Naive thymus-derived CD4-positive, alpha-beta T cell (primary cell): ENCODE measurements at regions of chr11 and their contacts with region 1.

Region 1: DNA sequence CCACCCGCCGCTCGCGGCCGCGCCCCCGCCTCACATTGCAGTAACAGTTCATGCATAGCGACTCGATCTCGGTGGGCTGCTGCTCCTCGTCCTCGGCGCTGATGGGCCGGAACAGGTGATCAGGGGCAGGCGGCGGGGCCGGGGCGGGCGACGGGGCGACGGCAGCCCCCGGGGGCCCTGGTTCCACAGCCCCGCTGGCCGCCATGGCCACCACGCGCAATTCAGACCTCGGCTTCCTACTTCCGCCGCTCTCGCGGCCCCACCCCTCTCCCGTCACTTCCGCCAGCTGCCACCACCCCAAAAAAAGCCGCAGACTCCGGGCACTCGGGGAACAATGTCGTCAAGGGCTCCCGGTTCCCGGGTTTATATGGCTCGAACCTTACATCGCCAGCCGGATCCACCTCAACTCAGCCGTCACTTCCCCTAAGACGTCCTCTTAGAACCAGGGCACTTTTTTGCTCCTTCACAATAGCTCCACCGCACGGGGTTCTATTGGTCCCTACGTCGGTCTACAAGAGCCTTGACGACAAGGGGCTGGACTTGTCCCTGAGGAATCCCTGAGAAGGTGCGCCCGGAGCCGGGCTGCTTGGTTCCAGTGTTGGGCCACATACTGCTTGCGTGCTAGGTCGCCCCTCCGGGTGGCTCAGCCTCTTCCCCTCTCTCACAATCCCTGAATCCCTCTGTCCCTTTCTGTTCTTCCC is at the start of gene ZPR1:
- DNase-seq: peak; percentile 75 to 88 (median 87)
- ATAC-seq: peak; percentile 92
- H3K4me3 ChIP-seq: peak within 1 kb of the TSS; percentile 79
- H3K4me3 Mint-ChIP-seq: peak within 1 kb of the TSS; percentile 85 to 98 (median 92)
- H3K27ac ChIP-seq: peak within 1 kb of the TSS; percentile 95
- H3K27ac Mint-ChIP-seq: peak within 1 kb of the TSS; percentile 80 to 98 (median 96)
- H3K4me1 ChIP-seq: peaks cover 17 to 24% of the 10 kb centered on the region in 2 donors
- H3K4me1 Mint-ChIP-seq: peaks cover 32 to 57% (median 44%) of the 10 kb centered on the region in 7 donors
- H3K27me3 ChIP-seq: no peaks in the 10 kb centered on the region
- H3K27me3 Mint-ChIP-seq: no peaks in the 10 kb centered on the region
- total RNA-seq, gene ZPR1: 65.8 to 117 (median 68.8) TPM

Region 2: GRCh38 chr11:116249561-116249960 is 538.4 kb before region 1 on chr11:
- CTCF ChIA-PET with region 1: no interaction called
- POLR2A ChIA-PET with region 1: no interaction called
- intact Hi-C with region 1: no loop called
- DNase-seq: no peak
- ATAC-seq: no peak
- H3K4me3 ChIP-seq: no peak overlapping the region
- H3K4me3 Mint-ChIP-seq: no peak overlapping the region
- H3K27ac ChIP-seq: no peak overlapping the region
- H3K27ac Mint-ChIP-seq: no peak overlapping the region
- H3K4me1 ChIP-seq: no peaks in the 10 kb centered on the region
- H3K4me1 Mint-ChIP-seq: no peaks in the 10 kb centered on the region
- H3K27me3 ChIP-seq: peaks cover 0 to 3% of the 10 kb centered on the region in 2 donors
- H3K27me3 Mint-ChIP-seq: peaks cover 0 to 15% (median 9%) of the 10 kb centered on the region in 5 donors

Region 3: GRCh38 chr11:116732271-116733042 is 55.5 kb before region 1 on chr11:
- CTCF ChIA-PET with region 1: no interaction called
- POLR2A ChIA-PET with region 1: interaction called, 3 read pairs
- intact Hi-C with region 1: loop called in 1 of 2 experiments (anchors 2 kb)
- DNase-seq: peak in 7 of 9 donors; percentile 24 to 56 (median 40)
- ATAC-seq: peak; percentile 91
- H3K4me3 ChIP-seq: no peak overlapping the region
- H3K4me3 Mint-ChIP-seq: peak overlapping the region in 1 of 10 donors; percentile 42
- H3K27ac ChIP-seq: no peak overlapping the region
- H3K27ac Mint-ChIP-seq: peak overlapping the region in 2 of 9 donors; percentile 6 to 57
- H3K4me1 ChIP-seq: peaks cover 0 to 5% of the 10 kb centered on the region in 2 donors
- H3K4me1 Mint-ChIP-seq: peaks cover 4 to 15% (median 8%) of the 10 kb centered on the region in 7 donors
- H3K27me3 ChIP-seq: no peaks in the 10 kb centered on the region
- H3K27me3 Mint-ChIP-seq: peaks cover 0 to 6% (median 0%) of the 10 kb centered on the region in 5 donors

Region 4: DNA sequence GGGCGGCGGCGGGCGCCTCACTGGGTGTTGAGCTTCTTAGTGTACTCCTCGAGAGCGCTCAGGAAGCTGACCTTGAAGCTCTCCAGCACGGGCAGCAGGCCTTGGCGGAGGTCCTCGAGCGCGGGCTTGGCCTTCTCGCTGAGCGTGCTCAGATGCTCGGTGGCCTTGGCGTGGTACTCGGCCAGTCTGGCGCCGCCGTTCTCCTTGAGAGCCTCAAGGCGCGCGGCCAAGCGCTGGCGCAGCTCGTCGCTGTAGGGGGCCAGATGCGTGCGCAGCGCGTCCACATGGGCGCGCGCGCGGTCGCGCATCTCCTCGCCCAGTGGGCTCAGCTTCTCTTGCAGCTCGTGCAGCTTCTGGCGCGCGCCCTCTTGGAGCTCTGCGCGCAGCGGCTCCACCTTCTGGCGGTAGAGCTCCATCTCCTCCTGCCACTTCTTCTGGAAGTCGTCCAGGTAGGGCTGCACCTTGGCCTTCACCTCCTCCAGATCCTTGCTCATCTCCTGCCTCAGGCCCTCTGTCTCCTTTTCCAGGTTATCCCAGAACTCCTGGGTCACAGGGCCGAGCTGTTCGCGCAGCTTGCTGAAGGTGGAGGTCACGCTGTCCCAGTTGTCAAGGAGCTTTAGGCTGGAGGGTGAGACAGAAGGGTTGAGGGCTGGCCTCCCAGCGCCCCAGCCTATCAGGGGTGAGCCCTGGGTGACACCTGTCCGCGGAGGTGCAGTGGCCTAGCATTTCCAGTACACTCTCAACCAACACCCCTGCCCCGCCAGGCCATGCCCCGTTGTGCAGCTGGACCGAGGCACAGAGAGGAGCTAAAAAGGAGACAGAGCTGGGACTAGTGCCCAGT is 48.1 kb after region 1 on chr11:
- CTCF ChIA-PET with region 1: interaction called, 66 read pairs
- POLR2A ChIA-PET with region 1: interaction called, 20 read pairs
- intact Hi-C with region 1: loop called (anchors 1 kb)
- DNase-seq: peak; percentile 66 to 85 (median 80)
- ATAC-seq: peak; percentile 97
- H3K4me3 ChIP-seq: peak overlapping the region; percentile 71
- H3K4me3 Mint-ChIP-seq: peak overlapping the region; percentile 68 to 84 (median 80)
- H3K27ac ChIP-seq: peak overlapping the region; percentile 41
- H3K27ac Mint-ChIP-seq: peak overlapping the region in 6 of 9 donors; percentile 31 to 75 (median 50)
- H3K4me1 ChIP-seq: peaks cover 4 to 9% of the 10 kb centered on the region in 2 donors
- H3K4me1 Mint-ChIP-seq: peaks cover 4 to 17% (median 14%) of the 10 kb centered on the region in 7 donors
- H3K27me3 ChIP-seq: no peaks in the 10 kb centered on the region
- H3K27me3 Mint-ChIP-seq: peaks cover 0 to 4% (median 0%) of the 10 kb centered on the region in 5 donors

Region 5: DNA sequence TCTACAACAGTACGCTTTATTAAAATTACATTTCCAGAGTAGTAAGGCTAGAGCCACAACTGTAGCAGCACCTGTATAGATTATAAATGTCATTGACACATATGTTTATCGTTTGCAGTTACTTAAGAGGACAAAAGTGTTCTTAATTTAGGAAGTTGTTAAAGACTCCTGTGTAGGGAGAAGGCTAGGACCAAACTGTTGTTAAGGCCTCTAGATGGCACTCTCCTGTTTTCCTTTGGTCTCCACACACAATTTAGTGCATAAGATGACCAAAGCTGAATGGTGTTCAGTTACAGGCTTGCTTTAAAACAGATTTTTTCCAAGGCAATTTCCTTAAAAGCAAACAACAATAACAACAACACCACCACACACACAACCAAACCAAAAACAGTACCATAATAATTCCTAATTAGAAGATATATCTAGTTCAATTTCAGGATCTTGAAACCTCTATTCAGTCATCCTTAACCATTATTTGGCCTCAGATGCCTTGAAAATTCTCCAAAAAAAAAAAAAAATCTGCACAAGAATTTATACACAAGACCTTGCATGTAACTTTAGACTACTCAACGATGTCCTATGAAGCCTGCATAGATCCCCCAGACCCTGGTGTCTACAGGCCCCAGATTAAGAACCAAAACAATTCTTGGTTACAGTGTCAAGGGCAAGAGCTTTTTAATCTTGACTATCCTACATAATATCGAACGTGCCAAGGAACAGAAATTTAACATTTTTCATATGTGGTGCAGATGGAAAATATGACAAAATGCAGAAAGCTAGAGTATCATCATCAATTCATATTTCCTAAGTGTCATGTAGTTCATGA is 92.1 kb after region 1 on chr11:
- CTCF ChIA-PET with region 1: interaction called, 17 read pairs
- POLR2A ChIA-PET with region 1: no interaction called
- intact Hi-C with region 1: loop called in 1 of 2 experiments (anchors 1 kb)
- DNase-seq: peak in 7 of 9 donors; percentile 31 to 54 (median 39)
- ATAC-seq: peak; percentile 84
- H3K4me3 ChIP-seq: no peak overlapping the region
- H3K4me3 Mint-ChIP-seq: no peak overlapping the region
- H3K27ac ChIP-seq: no peak overlapping the region
- H3K27ac Mint-ChIP-seq: peak overlapping the region in 4 of 9 donors; percentile 23 to 67 (median 46)
- H3K4me1 ChIP-seq: no peaks in the 10 kb centered on the region
- H3K4me1 Mint-ChIP-seq: peaks cover 0 to 18% (median 9%) of the 10 kb centered on the region in 7 donors
- H3K27me3 ChIP-seq: no peaks in the 10 kb centered on the region
- H3K27me3 Mint-ChIP-seq: no peaks in the 10 kb centered on the region

Region 6: GRCh38 chr11:117010808-117011540 is 223.0 kb after region 1 on chr11:
- CTCF ChIA-PET with region 1: no interaction called
- POLR2A ChIA-PET with region 1: no interaction called
- intact Hi-C with region 1: no loop called
- DNase-seq: no peak
- ATAC-seq: no peak
- H3K4me3 ChIP-seq: no peak overlapping the region
- H3K4me3 Mint-ChIP-seq: no peak overlapping the region
- H3K27ac ChIP-seq: no peak overlapping the region
- H3K27ac Mint-ChIP-seq: peak overlapping the region in 1 of 9 donors; percentile 60
- H3K4me1 ChIP-seq: peaks cover 0 to 18% of the 10 kb centered on the region in 2 donors
- H3K4me1 Mint-ChIP-seq: peaks cover 26 to 33% (median 30%) of the 10 kb centered on the region in 7 donors
- H3K27me3 ChIP-seq: no peaks in the 10 kb centered on the region
- H3K27me3 Mint-ChIP-seq: no peaks in the 10 kb centered on the region

Region 7: GRCh38 chr11:117143871-117144476 is 356.0 kb after region 1 on chr11 and contains the start of gene PAFAH1B2:
- CTCF ChIA-PET with region 1: interaction called, 3 read pairs
- POLR2A ChIA-PET with region 1: interaction called, 10 read pairs
- intact Hi-C with region 1: loop called in 1 of 2 experiments (anchors 1 kb)
- DNase-seq: peak; percentile 88 to 95 (median 94)
- ATAC-seq: peak; percentile 94
- H3K4me3 ChIP-seq: peak within 1 kb of the TSS; percentile 89
- H3K4me3 Mint-ChIP-seq: peak within 1 kb of the TSS; percentile 88 to 100 (median 97)
- H3K27ac ChIP-seq: peak within 1 kb of the TSS; percentile 85
- H3K27ac Mint-ChIP-seq: peak within 1 kb of the TSS; percentile 90 to 98 (median 97)
- H3K4me1 ChIP-seq: peaks cover 6 to 10% of the 10 kb centered on the region in 2 donors
- H3K4me1 Mint-ChIP-seq: peaks cover 28 to 57% (median 44%) of the 10 kb centered on the region in 7 donors
- H3K27me3 ChIP-seq: no peaks in the 10 kb centered on the region
- H3K27me3 Mint-ChIP-seq: peaks cover 11 to 24% (median 12%) of the 10 kb centered on the region in 5 donors
- total RNA-seq, gene PAFAH1B2: 48.9 to 62.0 (median 55.8) TPM

Region 8: DNA sequence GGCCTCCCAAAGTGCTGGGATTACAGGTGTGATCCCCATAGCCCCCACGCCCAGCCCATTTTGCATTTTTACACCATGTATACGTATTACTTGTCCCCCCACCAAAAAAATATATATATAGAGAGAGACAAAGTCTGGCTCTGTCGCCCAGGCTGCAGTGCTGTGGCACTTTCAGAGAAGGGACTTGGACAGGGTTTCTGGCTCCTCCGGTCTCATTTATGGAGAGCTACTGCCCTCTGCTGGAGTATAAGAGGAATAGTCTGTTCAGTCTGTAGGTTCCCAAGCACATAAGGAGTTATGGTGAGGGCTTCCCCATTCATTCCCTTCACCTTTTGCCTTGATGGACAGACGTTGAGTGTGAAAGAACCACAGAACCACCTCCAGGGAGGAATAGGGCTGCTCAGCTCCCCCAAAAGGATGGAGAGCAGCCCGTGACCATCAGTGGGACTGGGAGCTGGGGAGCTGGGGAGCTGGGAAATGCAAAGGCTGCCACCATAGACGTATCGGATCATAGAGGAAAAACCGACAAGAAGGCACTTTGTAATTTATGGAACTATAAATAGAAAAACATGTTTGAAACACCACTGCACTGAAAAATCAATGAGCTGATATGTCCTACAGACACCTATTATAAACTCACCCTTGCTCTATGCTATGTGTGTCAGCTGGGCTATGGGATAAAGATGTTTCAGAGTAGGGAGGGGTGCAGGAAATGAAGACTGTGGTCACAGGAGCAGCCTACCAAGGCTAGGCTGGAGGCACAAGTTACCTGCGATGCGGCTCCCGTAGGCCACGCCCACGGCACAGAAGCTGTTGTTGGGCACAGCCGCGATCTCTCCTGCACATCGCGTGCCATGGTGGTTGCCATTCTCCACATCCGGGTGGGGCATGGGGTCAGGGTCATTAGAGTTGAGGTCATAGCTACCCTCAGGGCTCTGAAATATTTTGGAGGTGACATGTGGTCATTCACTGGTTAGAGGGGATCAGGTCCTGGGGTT is 438.8 kb after region 1 on chr11:
- CTCF ChIA-PET with region 1: interaction called, 9 read pairs
- POLR2A ChIA-PET with region 1: interaction called, 7 read pairs
- intact Hi-C with region 1: loop called (anchors 1 kb)
- DNase-seq: peak in 7 of 9 donors; percentile 55 to 74 (median 69)
- ATAC-seq: peak; percentile 90
- H3K4me3 ChIP-seq: no peak overlapping the region
- H3K4me3 Mint-ChIP-seq: peak overlapping the region in 5 of 10 donors; percentile 18 to 43 (median 33)
- H3K27ac ChIP-seq: peak overlapping the region; percentile 37
- H3K27ac Mint-ChIP-seq: peak overlapping the region in 8 of 9 donors; percentile 52 to 94 (median 76)
- H3K4me1 ChIP-seq: peaks cover 32 to 33% of the 10 kb centered on the region in 2 donors
- H3K4me1 Mint-ChIP-seq: peaks cover 36 to 54% (median 42%) of the 10 kb centered on the region in 7 donors
- H3K27me3 ChIP-seq: no peaks in the 10 kb centered on the region
- H3K27me3 Mint-ChIP-seq: no peaks in the 10 kb centered on the region

Region 9: GRCh38 chr11:117327567-117328374 is 539.8 kb after region 1 on chr11 and contains the start of gene CEP164:
- CTCF ChIA-PET with region 1: no interaction called
- POLR2A ChIA-PET with region 1: no interaction called
- intact Hi-C with region 1: loop called in 1 of 2 experiments (anchors 5 kb)
- DNase-seq: peak; percentile 76 to 95 (median 93)
- ATAC-seq: peak; percentile 96
- H3K4me3 ChIP-seq: peak within 1 kb of the TSS; percentile 66
- H3K4me3 Mint-ChIP-seq: peak within 1 kb of the TSS in 8 of 10 donors; percentile 26 to 69 (median 44)
- H3K27ac ChIP-seq: peak within 1 kb of the TSS; percentile 79
- H3K27ac Mint-ChIP-seq: peak within 1 kb of the TSS in 4 of 9 donors; percentile 11 to 81 (median 68)
- H3K4me1 ChIP-seq: peaks cover 0 to 10% of the 10 kb centered on the region in 2 donors
- H3K4me1 Mint-ChIP-seq: peaks cover 0 to 19% (median 14%) of the 10 kb centered on the region in 7 donors
- H3K27me3 ChIP-seq: no peaks in the 10 kb centered on the region
- H3K27me3 Mint-ChIP-seq: peaks cover 0 to 4% (median 0%) of the 10 kb centered on the region in 5 donors
- total RNA-seq, gene CEP164: 36.6 to 47.6 (median 36.8) TPM